Esophagus muscularis mucosa (tissue), 4 donors: ENCODE measurements at regions of chr4 and their contacts with region 1.

Region 1: DNA sequence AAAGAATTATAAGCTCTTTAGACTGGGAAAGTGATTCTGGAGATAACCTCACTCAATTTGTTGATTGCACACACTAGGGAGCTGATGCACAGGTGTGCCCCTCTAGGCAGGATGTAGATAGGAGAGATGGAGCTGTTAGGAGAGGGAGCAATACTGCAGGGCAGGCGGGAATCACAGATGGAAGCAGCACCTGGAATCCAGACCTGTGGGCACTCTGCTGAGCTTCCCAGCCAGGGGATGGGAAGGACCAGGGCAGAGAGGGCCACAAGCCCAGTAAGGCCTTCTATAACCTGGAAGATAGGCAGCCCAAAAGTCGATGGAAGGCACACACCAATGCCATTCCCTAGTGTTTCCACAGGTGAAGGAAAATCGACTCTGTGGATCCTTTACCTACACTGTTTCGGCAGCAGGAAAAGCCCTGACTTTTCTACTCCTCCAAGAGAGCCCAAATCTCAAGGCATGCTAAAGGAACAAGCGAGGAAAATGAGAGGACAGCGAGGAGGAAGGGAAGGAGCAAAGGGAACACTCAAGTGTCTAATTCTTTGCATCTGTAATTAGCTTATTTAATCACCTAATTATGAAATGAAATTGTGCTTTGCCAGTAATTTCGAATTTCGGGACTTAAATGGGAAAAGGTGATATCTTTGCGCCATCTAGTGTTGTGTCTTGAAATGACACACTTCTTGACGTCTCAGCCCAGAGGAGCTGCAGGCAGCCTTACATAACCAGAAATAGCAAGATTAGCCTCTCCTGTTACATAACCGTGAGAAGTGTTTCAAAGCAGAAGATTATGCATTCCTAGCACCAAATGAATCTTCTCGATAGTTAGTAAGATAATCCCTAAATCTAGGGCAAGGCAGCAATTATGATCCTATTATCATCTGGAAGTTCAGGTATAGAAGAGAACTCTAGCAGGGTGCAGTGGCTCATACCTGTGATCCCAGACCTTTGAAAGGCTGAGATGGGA is 31.0 kb upstream of the TLR3 start:
- DNase-seq: no peak
- H3K4me3 ChIP-seq: no peak overlapping the region
- H3K27ac ChIP-seq: peak overlapping the region; percentile 64 to 80 (median 68)
- H3K4me1 ChIP-seq: peaks cover 15 to 38% (median 36%) of the 10 kb centered on the region in 4 donors
- H3K27me3 ChIP-seq: no peaks in the 10 kb centered on the region
- CTCF ChIP-seq: peak; percentile 78 to 87 (median 86)
- EP300 ChIP-seq: no peak
- POLR2A ChIP-seq: no peak

Region 2: GRCh38 chr4:185640811-185641675 is 396.9 kb before region 1 on chr4:
- intact Hi-C with region 1: loop called (anchors 5 kb)
- DNase-seq: no peak
- H3K4me3 ChIP-seq: no peak overlapping the region
- H3K27ac ChIP-seq: peak overlapping the region in 2 of 4 donors; percentile 6 to 7
- H3K4me1 ChIP-seq: peaks cover 6 to 30% (median 15%) of the 10 kb centered on the region in 4 donors
- H3K27me3 ChIP-seq: no peaks in the 10 kb centered on the region
- CTCF ChIP-seq: peak; percentile 46 to 54 (median 51)
- EP300 ChIP-seq: no peak
- POLR2A ChIP-seq: no peak

Region 3: DNA sequence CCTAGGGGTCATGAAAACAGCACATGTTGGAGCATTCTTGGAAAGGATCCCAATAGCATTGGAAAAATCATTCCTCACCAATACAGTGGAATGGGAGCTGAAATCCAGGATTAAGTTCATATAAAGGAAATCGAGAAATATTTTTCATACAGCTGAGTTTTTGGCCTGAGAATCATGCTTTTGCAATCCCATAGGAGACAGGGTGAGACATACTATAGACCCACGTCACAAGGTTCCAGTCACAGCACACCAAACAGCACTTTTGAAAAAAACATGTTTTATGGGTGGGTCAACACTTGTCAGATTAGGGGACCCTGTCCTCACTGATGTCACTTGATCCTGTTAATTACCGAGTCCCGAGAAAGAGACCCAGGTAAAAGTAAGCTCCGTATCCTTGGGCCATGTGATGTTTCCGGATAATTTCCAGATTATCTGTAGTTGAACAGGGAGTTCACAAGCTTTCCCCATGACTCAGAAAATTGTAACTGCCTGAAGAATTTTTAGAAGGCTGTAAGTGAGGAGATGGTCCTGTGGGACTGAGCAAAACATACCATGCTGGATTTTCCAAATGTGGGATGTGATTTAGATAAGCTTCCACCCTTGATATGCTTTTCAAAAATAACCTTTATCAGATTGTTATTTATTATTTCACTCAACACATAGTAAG is 49.9 kb before region 1 on chr4:
- intact Hi-C with region 1: no loop called
- DNase-seq: no peak
- H3K4me3 ChIP-seq: no peak overlapping the region
- H3K27ac ChIP-seq: no peak overlapping the region
- H3K4me1 ChIP-seq: no peaks in the 10 kb centered on the region
- H3K27me3 ChIP-seq: no peaks in the 10 kb centered on the region
- CTCF ChIP-seq: no peak
- EP300 ChIP-seq: no peak
- POLR2A ChIP-seq: no peak

Region 4: DNA sequence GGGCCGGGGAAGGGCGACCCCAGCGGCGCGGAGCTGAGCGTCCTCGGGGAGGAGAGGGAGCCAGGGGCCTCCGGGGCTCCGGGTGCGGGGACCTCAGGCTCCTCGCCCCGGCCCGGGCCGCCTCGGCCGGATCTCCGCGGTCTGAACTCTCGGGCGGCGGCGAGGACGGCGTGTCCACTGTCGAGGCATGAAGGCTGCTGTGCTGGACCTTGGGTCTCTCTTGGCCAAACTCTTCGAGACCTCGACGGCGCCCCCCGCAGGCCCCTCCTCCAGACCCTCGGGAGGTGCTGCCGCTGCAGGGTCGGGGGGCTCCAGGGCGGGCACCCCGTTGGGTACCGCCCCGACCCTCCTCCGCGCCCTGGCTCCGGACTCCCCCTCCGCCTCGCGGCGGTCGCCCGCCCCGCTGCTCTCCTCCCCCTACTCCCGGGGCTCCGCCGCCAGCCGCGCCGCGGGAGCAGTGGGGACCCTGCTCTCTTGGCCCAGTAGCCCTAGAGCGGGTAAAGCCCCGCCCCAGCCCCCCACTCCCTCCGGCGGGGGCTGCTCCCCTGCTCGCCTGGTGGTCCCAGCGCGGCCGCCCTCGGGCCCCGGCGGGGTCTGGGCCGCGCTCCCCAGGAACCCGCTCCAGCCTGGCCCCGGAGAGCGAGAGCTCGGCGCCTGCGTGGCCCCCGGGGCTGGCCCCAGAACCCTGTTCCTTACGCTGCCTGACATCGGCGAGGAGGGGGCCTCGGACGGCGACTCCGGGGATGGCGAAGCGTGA is 67.1 kb after region 1 on chr4:
- intact Hi-C with region 1: no loop called
- DNase-seq: no peak
- H3K4me3 ChIP-seq: peak overlapping the region; percentile 76 to 93 (median 85)
- H3K27ac ChIP-seq: peak overlapping the region; percentile 68 to 78 (median 78)
- H3K4me1 ChIP-seq: peaks cover 10 to 39% (median 37%) of the 10 kb centered on the region in 4 donors
- H3K27me3 ChIP-seq: peaks cover 0 to 6% (median 2%) of the 10 kb centered on the region in 4 donors
- CTCF ChIP-seq: no peak
- EP300 ChIP-seq: no peak
- POLR2A ChIP-seq: no peak

Region 5: GRCh38 chr4:186342582-186342981 is 304.6 kb after region 1 on chr4:
- intact Hi-C with region 1: no loop called
- DNase-seq: peak; percentile 72
- H3K4me3 ChIP-seq: no peak overlapping the region
- H3K27ac ChIP-seq: no peak overlapping the region
- H3K4me1 ChIP-seq: no peaks in the 10 kb centered on the region
- H3K27me3 ChIP-seq: peaks cover 0 to 35% (median 0%) of the 10 kb centered on the region in 4 donors
- CTCF ChIP-seq: no peak
- EP300 ChIP-seq: no peak
- POLR2A ChIP-seq: no peak